ENCODE measurements at regions of chr1 and their contacts with region 1.

Region 1: DNA sequence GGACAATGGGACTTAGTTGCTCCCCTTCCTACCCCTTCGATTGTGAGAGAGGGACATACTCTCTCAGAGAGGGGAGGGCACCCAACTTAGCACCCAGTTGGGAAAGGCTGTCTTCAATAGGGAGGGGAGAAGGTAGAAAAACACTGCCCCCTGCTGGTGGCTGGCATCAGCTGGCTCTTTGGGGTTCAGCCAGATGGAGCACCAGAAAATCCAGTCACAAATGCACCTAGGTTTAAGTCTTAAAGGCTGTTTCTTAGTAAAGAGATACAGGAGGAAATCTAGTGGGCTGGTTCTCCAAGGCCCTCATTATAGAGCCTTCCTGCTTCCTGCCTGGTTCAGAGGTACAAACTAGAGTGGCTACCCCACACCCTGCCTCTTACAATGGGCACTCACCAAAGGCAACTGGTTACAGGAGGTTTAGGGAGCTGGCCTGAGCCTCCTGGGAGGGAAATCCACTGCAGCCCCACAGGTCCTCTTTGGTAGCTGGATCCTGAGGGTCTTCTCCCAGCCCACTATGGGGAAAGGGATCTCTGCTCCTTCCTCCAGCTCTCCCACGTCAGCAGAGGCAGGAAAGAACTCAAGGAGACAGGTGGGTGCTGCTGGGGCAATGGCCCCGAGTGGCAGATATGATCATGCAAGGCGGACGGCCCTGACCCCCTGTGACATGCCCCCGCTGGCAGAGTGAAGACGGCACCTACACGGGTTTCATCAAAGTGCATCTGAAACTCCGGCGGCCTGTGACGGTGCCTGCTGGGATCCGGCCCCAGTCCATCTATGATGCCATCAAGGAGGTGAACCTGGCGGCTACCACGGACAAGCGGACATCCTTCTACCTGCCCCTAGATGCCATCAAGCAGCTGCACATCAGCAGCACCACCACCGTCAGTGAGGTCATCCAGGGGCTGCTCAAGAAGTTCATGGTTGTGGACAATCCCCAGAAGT is 28.3 kb downstream of the EIF2D start:
- DNase-seq: peak; percentile 29
- H3K4me3 ChIP-seq: no peak overlapping the region
- H3K27ac ChIP-seq: no peak overlapping the region
- H3K27me3 ChIP-seq: no peaks in the 10 kb centered on the region
- CTCF ChIP-seq: peak; percentile 96

Region 2: DNA sequence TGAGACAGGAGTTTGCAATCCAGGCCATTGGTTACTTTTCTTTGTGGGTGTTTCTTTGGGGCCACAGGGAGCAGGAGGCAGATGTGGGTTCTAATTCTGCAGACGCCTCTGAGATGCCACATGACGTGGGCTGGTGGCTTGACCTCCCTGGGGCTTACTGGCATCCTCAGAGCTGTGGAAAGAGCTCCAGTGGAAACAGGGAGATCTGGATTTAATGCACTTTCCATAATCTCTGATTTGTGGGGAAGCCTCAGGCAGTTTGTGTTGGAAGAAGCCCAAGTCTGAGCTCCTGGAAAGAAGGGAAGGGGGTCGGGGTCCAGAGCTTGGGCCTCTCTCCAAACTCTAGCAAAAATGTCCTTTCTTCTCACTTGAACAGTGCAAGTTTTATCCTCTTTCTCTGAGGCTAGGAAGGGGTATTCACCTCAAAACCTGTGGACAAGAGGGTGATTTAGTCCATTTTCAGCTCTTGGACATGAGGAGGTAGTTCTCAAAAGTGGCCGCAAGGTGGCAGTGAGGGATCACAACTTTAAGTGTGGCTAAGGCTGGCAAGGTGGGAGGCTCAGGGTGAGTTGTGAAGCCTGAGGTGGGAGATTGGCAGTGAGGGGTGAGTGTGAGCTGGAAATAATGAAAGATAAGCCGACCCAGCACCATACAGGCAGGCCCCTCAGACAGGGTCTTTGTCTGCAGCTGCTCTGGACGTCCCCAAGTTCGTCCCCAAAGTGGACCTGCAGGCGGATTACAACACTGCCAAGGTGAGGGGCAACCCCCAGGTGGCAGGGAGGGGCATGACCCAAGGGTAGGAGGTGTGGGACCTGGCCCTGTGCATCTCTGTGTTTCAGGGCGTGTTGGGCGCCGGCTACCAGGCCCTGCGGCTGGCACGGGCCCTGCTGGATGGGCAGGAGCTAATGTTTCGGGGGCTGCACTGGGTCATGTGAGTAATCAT is 104.5 kb before region 1 on chr1:
- CTCF ChIA-PET with region 1: interaction called, 23 read pairs
- POLR2A ChIA-PET with region 1: no interaction called
- DNase-seq: peak; percentile 59
- H3K4me3 ChIP-seq: no peak overlapping the region
- H3K27ac ChIP-seq: no peak overlapping the region
- H3K27me3 ChIP-seq: no peaks in the 10 kb centered on the region
- CTCF ChIP-seq: peak; percentile 83

Region 3: DNA sequence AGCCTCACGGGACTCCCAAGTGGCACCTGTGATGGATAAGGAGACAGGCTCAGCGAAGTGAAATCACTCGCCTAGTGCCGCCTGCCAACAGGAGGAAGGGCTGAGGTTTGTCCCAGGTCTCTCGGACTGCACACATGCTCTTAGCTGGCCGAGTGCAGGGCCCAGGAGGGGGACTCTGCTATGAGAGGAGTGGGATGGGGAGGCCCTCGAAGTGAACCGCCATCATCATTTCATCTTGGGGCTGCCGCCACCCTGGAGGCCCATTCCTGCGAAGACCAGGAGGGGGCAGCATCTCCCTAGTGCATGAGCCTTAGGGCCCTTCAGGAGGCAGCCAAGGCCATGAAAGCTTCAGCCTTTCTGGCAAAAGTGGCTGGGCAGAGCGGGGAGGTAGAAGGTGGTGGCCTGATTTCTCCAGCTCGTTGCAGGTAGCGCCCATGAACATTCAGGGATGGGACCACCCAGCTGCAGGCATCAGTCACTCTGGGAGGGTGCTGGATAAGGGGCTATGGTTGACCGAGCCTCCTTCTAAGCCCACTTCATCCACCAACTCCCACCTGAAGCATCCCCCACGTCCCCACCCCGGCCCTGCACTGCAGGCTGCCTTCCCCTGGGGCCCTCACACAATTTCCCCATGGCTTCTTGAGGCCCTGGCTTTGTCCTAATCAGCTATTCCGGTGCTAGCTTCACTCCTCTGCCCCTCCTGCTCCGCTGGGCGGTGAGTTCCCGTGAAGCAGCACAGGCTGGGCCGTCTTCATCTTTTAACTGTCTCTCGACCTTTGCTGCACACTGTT is 93.8 kb before region 1 on chr1:
- CTCF ChIA-PET with region 1: interaction called, 86 read pairs
- POLR2A ChIA-PET with region 1: interaction called, 3 read pairs
- DNase-seq: no peak
- H3K4me3 ChIP-seq: no peak overlapping the region
- H3K27ac ChIP-seq: no peak overlapping the region
- H3K27me3 ChIP-seq: no peaks in the 10 kb centered on the region
- CTCF ChIP-seq: peak; percentile 99

Region 4: GRCh38 chr1:206496131-206496793 is 87.7 kb before region 1 on chr1:
- CTCF ChIA-PET with region 1: interaction called, 86 read pairs
- POLR2A ChIA-PET with region 1: interaction called, 3 read pairs
- DNase-seq: no peak
- H3K4me3 ChIP-seq: no peak overlapping the region
- H3K27ac ChIP-seq: peak overlapping the region; percentile 21
- H3K27me3 ChIP-seq: no peaks in the 10 kb centered on the region
- CTCF ChIP-seq: no peak

Region 5: GRCh38 chr1:206507284-206508129 is 76.5 kb before region 1 on chr1 and contains the start of gene RASSF5:
- CTCF ChIA-PET with region 1: interaction called, 28 read pairs
- POLR2A ChIA-PET with region 1: no interaction called
- DNase-seq: no peak
- H3K4me3 ChIP-seq: peak within 1 kb of the TSS; percentile 60
- H3K27ac ChIP-seq: no peak within 1 kb of the TSS
- H3K27me3 ChIP-seq: peaks cover 8% of the 10 kb centered on the region
- CTCF ChIP-seq: no peak
- polyA plus RNA-seq, gene RASSF5: 2.3 and 2.4 TPM in 2 replicates

Region 6: GRCh38 chr1:206556750-206557635 is 27.0 kb before region 1 on chr1:
- CTCF ChIA-PET with region 1: interaction called, 11 read pairs
- POLR2A ChIA-PET with region 1: no interaction called
- DNase-seq: no peak
- H3K4me3 ChIP-seq: peak overlapping the region; percentile 54
- H3K27ac ChIP-seq: no peak overlapping the region
- H3K27me3 ChIP-seq: peaks cover 13% of the 10 kb centered on the region
- CTCF ChIP-seq: no peak

Region 7: GRCh38 chr1:206563367-206564207 is 20.4 kb before region 1 on chr1:
- CTCF ChIA-PET with region 1: interaction called, 22 read pairs
- POLR2A ChIA-PET with region 1: no interaction called
- DNase-seq: no peak
- H3K4me3 ChIP-seq: no peak overlapping the region
- H3K27ac ChIP-seq: no peak overlapping the region
- H3K27me3 ChIP-seq: peaks cover 5% of the 10 kb centered on the region
- CTCF ChIP-seq: no peak

Region 8: GRCh38 chr1:206600527-206600926 is 16.5 kb after region 1 on chr1:
- CTCF ChIA-PET with region 1: no interaction called
- POLR2A ChIA-PET with region 1: no interaction called
- DNase-seq: no peak
- H3K4me3 ChIP-seq: no peak overlapping the region
- H3K27ac ChIP-seq: no peak overlapping the region
- H3K27me3 ChIP-seq: no peaks in the 10 kb centered on the region
- CTCF ChIP-seq: no peak

Measured in AG04450 (cell line).